OCI-LY7 (cell line): ENCODE measurements at regions of chr22 and their contacts with region 1.

Region 1: DNA sequence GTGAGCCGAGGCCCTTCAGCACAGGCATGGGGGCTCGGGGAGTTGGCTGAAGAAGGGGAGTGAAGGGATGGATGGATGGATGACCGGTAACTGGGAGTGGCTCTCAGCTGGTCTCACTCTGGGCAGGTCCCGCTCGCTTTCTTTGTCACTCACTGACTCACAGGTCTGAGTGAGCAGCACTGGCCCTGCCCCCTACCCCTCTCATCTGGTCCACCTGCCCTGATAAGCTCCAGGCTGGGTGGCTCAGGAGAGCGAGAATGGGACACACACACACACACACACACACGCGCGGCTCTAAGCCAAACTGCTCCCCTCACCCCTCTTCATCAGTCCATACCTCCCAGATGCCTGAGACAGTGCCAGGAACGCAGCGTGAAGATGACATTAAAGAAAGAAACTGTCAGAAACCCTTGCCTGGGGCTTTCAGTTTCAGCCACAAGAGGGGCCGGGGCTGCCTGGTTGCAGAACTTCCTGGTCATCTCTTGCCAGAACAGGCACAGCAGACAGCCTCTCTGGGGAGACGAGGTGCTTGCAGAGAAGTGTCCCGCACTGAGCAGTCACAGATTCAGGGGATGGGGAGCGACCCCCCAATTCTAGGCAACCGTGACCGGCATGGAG is 16.5 kb upstream of the SHISAL1 start:
- DNase-seq: peak; percentile 79
- H3K4me3 ChIP-seq: peak overlapping the region; percentile 53
- H3K27ac ChIP-seq: peak overlapping the region; percentile 34
- H3K4me1 ChIP-seq: peaks cover 30% of the 10 kb centered on the region
- CTCF ChIP-seq: no peak

Region 2: GRCh38 chr22:44192098-44192810 is 137.0 kb before region 1 on chr22:
- CTCF ChIA-PET with region 1: no interaction called
- POLR2A ChIA-PET with region 1: interaction called, 3 read pairs
- intact Hi-C with region 1: loop called (anchors 10 kb)
- DNase-seq: peak; percentile 41
- H3K4me3 ChIP-seq: no peak overlapping the region
- H3K27ac ChIP-seq: no peak overlapping the region
- H3K4me1 ChIP-seq: peaks cover 12% of the 10 kb centered on the region
- CTCF ChIP-seq: no peak

Region 3: DNA sequence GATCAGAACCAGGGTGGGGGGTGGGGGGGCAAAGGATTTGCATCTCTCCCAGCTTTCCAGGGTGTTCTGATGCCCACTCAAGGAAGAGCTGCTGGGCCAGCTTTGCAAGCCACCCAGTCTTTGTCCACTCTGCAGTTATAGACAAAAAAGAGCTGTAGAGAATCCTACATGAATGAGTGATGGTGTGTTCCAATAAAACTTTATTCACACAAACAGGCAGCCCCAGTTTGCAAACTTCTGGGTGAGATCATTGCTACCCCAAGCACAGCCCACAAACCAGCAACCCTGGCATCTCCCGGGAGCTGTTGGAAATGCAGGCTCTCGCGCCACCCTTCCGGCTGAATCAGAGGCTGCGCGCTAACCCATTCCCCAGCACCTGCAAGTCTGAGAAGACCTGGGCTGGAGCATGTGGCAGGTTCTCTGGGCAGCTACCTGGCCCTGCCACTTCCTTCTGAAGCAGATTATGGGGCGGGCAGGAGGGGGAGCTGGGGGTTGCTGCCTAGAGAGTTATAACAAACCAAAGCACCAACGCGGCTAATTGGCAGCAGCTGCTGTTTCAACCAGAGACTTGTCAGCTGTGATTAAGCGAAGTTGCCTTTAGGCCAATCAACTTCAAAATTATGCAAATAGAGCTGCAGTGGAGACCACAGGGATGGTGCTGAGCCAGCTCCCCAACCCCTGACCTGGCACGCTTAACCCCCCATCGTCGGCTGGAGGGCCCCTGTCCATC is 12.7 kb before region 1 on chr22:
- CTCF ChIA-PET with region 1: no interaction called
- POLR2A ChIA-PET with region 1: no interaction called
- intact Hi-C with region 1: no loop called
- DNase-seq: no peak
- H3K4me3 ChIP-seq: no peak overlapping the region
- H3K27ac ChIP-seq: no peak overlapping the region
- H3K4me1 ChIP-seq: no peaks in the 10 kb centered on the region
- CTCF ChIP-seq: no peak

Region 4: GRCh38 chr22:44620129-44620840 is 291.0 kb after region 1 on chr22:
- CTCF ChIA-PET with region 1: no interaction called
- POLR2A ChIA-PET with region 1: no interaction called
- intact Hi-C with region 1: loop called (anchors 5 kb)
- DNase-seq: peak; percentile 47
- H3K4me3 ChIP-seq: no peak overlapping the region
- H3K27ac ChIP-seq: no peak overlapping the region
- H3K4me1 ChIP-seq: no peaks in the 10 kb centered on the region
- CTCF ChIP-seq: no peak